ENCODE measurements at regions of chr2 and their contacts with region 1.

Region 1: GRCh38 chr2:64831134-64831976 is 157.8 kb upstream of the SLC1A4 start:
- DNase-seq: peak; percentile 86
- CTCF ChIP-seq: peak; percentile 89

Region 2: GRCh38 chr2:64609227-64609941 is 222.0 kb before region 1 on chr2:
- CTCF ChIA-PET with region 1: interaction called, 30 read pairs
- POLR2A ChIA-PET with region 1: no interaction called
- DNase-seq: peak; percentile 91
- CTCF ChIP-seq: peak; percentile 82

Region 3: GRCh38 chr2:64685438-64685837 is 145.9 kb before region 1 on chr2:
- CTCF ChIA-PET with region 1: no interaction called
- POLR2A ChIA-PET with region 1: no interaction called
- DNase-seq: no peak
- CTCF ChIP-seq: no peak

Region 4: GRCh38 chr2:64792307-64792706 is 39.0 kb before region 1 on chr2:
- CTCF ChIA-PET with region 1: interaction called, 22 read pairs
- POLR2A ChIA-PET with region 1: no interaction called
- DNase-seq: no peak
- CTCF ChIP-seq: no peak

Region 5: DNA sequence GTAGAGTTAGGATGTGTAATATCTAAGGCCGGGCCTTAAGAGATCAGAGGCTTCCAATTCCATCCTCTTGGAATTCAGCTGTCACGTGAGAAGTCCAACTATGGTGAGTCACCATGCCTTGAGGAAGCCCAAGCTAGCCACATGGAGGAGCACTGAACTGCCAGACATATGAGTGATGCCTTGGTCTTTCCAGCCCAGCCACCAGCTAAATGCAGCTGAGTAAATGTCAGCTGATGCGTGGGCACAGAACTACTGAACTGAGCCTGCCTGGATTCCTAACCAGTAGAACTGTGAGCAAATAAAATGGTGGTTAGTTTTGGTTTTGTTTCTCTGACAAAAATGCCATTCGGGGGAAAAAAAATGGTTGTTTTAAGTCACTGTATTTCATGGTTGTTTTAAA is 23.9 kb before region 1 on chr2:
- CTCF ChIA-PET with region 1: interaction called, 21 read pairs
- POLR2A ChIA-PET with region 1: no interaction called
- DNase-seq: peak; percentile 48
- CTCF ChIP-seq: peak; percentile 5

Region 6: GRCh38 chr2:64819774-64820696 is 11.3 kb before region 1 on chr2:
- CTCF ChIA-PET with region 1: interaction called, 62 read pairs
- POLR2A ChIA-PET with region 1: no interaction called
- DNase-seq: peak; percentile 45
- CTCF ChIP-seq: no peak

Region 7: DNA sequence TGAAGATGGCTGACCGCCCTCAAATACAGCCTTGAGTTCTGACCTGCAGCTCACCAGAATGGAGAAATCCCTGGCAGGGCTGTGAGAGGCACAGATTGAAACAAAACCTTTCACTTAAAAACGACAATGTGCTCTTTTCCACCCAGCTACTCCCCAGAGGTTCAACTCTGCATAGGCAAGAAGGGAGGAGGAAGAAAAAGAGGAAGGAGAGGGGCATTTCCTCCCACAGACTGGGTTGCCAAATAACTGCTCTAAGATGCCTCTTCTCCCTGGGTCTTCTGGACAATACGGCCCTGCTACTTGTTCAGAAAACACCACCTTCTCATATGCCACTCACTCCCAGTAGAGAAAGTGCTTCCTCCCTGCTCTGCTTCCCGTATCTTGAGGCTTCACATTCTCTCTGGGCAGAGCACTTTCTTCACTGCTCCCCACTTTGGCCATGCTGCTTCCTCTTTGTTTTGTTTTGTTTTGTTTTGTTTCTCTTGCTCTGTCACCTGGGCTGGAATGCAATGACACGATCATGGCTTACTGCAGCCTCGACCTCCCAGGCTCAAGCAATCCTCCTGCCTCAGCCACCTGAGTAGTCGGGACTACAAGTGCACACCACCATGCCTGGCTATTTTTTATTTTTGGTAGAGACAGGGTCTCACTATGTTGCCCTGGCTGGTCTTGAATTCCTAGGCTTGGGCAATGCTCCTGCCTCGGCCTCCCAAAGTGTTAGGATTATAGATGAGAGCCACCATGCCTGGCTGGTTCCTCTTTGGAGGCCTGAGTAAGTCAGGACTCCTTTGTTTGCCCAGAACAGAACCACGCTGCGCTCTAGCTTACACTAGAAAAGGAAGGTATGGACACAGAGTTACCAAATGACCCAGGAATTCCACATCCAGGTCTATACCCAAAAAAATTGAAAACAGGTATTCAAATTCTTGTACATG is 21.7 kb after region 1 on chr2:
- CTCF ChIA-PET with region 1: interaction called, 30 read pairs
- POLR2A ChIA-PET with region 1: no interaction called
- DNase-seq: no peak
- CTCF ChIP-seq: no peak

Measured in GM10248 (cell line).